BJ (cell line): ENCODE measurements at regions of chr1 and their contacts with region 1.

Region 1: GRCh38 chr1:153352523-153352922 is 3.9 kb upstream of the PGLYRP4 start:
- DNase-seq: no peak
- H3K4me3 ChIP-seq: no peak overlapping the region
- H3K27me3 ChIP-seq: peaks cover 6% of the 10 kb centered on the region; the same call in 1 of the 2 replicates
- CTCF ChIP-seq: peak; percentile 80

Region 2: DNA sequence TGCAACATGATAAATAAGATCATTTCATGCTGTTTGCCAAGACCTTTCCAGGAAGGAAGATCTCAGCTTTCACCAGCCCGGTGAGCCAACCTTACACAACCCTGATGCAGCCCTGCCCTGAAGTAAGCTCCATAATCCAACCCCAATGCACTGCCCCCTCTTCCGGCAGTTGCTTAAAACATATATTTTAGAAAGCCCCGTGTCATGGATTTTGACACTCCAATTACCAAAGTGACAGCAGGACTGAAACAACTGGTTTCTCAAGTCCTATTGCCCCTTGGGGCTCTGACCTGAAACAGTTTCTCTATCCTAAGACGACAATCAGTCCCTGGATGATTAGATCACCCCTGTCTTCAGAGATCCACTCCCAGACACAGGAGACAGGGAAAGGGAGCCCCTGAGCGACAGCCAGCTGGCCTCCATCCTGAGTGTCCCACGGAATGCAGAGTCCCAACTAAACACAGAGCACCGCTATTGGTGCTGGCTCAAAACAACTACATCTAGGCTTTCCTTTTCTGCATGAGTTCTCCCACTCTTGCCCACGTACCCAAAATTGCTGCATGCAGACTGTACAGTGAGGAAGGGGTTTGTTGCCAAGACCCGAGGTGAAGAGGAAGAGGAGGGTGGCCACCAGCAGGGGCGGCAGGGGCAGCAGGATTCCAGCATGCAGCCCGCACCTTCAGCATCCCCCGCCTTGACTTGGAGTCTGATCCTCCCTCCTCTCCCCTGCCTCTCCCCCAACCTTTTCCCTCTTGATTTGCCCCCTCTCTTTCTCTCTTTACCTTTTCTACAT is 13.0 kb after region 1 on chr1:
- CTCF ChIA-PET with region 1: interaction called, 12 read pairs
- POLR2A ChIA-PET with region 1: no interaction called
- DNase-seq: no peak
- H3K4me3 ChIP-seq: no peak overlapping the region
- H3K27me3 ChIP-seq: peaks cover 6% of the 10 kb centered on the region
- CTCF ChIP-seq: no peak

Region 3: GRCh38 chr1:153375511-153375910 is 23.0 kb after region 1 on chr1 and contains the start of gene S100A12:
- CTCF ChIA-PET with region 1: interaction called, 14 read pairs
- POLR2A ChIA-PET with region 1: no interaction called
- DNase-seq: peak; percentile 22
- H3K4me3 ChIP-seq: no peak within 1 kb of the TSS
- H3K27me3 ChIP-seq: peaks cover 6% of the 10 kb centered on the region
- CTCF ChIP-seq: no peak
- polyA plus RNA-seq, gene S100A12: not detected in 2 replicates